T-cell (primary cell): ENCODE measurements at regions of chr1 and their contacts with region 1.

Region 1: DNA sequence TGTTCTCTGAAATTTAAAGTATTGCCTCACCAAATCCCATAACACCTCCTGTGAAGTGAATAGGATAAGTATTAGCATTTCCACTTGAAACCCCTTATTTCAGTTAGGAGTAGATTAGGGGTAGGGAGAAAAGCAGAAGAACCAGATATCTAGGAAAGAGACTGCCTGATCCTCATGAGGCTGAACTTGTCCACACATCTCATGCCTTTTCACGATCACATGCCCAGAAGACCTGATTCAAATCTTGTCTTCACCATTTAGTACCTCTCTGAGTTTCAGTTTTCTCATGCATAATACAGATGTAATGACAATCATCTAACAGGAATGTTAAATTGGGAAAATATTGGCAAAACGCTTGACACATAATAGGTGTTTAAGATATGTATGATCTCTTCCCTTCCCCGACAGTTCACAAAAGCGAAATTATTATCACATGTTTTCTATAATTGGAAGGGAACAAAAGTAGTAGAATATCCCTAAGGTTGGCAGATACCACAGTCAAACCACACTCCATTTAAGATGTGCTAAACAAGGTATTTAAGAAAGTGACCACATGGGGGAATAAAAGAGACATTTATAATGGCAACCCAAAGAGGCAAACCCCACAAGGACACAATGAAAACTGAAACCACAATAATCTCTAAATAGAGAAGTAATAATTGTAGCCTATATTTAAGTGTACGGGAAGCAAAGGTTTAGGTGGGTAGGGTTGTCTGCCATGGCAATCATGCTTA is 25.2 kb downstream of the GFI1 start:
- DNase-seq: peak in 1 of 35 experiments; percentile 43
- ATAC-seq: peak in 1 of 4 experiments; percentile 23
- H3K4me3 ChIP-seq: no peak overlapping the region
- H3K4me3 Mint-ChIP-seq: no peak overlapping the region
- H3K27ac ChIP-seq: no peak overlapping the region
- H3K27ac Mint-ChIP-seq: no peak overlapping the region
- H3K4me1 ChIP-seq: peaks cover 25 to 27% of the 10 kb centered on the region in 2 experiments
- H3K4me1 Mint-ChIP-seq: peaks cover 42 to 52% (median 46%) of the 10 kb centered on the region in 3 donors
- H3K27me3 ChIP-seq: no peaks in the 10 kb centered on the region
- H3K27me3 Mint-ChIP-seq: no peaks in the 10 kb centered on the region

Region 2: GRCh38 chr1:92424381-92424780 is 37.1 kb before region 1 on chr1:
- CTCF ChIA-PET with region 1: no interaction called
- POLR2A ChIA-PET with region 1: interaction called in 1 of 2 experiments, 11 read pairs
- DNase-seq: no peak
- ATAC-seq: no peak
- H3K4me3 ChIP-seq: no peak overlapping the region
- H3K4me3 Mint-ChIP-seq: no peak overlapping the region
- H3K27ac ChIP-seq: no peak overlapping the region
- H3K27ac Mint-ChIP-seq: no peak overlapping the region
- H3K4me1 ChIP-seq: no peaks in the 10 kb centered on the region
- H3K4me1 Mint-ChIP-seq: no peaks in the 10 kb centered on the region
- H3K27me3 ChIP-seq: no peaks in the 10 kb centered on the region
- H3K27me3 Mint-ChIP-seq: no peaks in the 10 kb centered on the region

Region 3: DNA sequence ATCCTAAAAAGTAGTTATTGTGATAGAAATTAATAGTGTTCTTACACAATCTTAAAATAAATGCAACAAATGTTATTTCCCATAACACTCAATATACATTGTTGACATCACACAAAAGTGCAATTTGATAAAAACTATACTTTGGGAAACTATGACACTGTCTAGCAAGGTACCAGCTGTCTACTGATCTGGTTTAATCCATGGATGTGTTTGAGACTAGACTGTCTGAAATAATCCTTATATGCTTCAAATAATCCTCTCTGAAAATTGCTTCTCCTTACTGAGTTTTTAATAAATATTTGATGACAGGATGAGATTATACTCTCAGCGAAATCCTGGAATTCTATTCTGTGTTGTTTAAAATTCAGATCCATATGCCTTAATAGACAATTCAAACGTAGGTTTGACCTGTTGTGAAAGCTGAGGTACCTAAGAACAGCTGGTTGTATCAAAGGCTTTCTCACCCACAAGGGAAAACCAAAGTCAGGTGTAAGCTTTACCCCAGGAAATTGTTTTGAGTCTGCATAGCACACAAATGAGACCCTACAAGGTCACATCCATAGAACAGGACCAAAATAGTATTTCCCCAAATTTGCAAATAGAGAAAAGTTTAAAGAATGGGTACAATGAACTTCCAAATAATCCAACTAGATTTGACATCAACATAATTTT is 34.0 kb after region 1 on chr1:
- CTCF ChIA-PET with region 1: no interaction called
- POLR2A ChIA-PET with region 1: interaction called in 1 of 2 experiments, 10 read pairs
- DNase-seq: peak in 1 of 35 experiments; percentile 38
- ATAC-seq: peak in 3 of 4 experiments; percentile 80 to 91 (median 83)
- H3K4me3 ChIP-seq: no peak overlapping the region
- H3K4me3 Mint-ChIP-seq: peak overlapping the region in 2 of 3 donors; percentile 10 to 61
- H3K27ac ChIP-seq: no peak overlapping the region
- H3K27ac Mint-ChIP-seq: peak overlapping the region in 1 of 2 donors; percentile 13
- H3K4me1 ChIP-seq: peaks cover 9 to 29% of the 10 kb centered on the region in 2 experiments
- H3K4me1 Mint-ChIP-seq: peaks cover 24 to 33% (median 29%) of the 10 kb centered on the region in 3 donors
- H3K27me3 ChIP-seq: no peaks in the 10 kb centered on the region
- H3K27me3 Mint-ChIP-seq: no peaks in the 10 kb centered on the region